ENCODE measurements at regions of chrX and their contacts with region 1.

Region 1: DNA sequence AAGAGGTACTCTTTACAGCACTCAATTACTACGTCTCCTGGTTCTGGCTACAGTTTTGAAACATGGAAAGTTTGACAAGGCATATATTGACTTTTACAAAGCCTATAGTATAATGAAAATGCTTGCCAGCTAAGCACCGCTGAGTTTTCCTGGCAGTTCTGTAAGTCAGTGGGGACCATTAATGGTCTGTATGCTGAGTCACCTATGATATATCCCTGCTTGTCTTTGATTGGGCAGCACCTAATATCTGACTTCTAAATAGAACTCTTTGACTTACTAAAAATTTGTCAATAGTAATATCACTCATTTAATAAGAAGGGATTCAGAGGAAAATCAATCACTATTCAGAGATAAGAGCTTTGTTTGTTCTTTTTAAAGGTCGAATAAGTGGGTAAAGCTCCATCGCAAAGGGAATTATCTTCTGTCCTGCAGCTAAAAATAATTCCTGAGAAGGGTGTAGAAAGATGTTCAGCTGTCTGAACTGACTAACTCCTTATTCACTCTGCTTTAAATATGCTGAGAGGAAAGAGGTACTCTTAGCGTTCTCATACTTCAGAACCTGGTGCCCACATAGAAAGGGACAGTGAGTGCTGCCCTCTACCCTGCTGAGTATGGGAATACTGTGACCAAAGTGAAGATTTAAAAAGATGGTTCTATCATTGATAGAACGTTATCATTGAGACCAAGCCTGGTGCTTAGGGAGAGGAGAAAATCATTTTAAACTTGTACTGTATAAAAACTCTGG is 959 bp downstream of the SMPX start:
- DNase-seq: no peak
- ATAC-seq: peak; percentile 82 to 89 (median 86)
- H3K4me3 ChIP-seq: peak overlapping the region; percentile 29 to 62 (median 49)
- H3K27ac ChIP-seq: peak overlapping the region; percentile 56 to 95 (median 84)
- H3K4me1 ChIP-seq: peaks cover 0 to 3% (median 0%) of the 10 kb centered on the region in 12 donors
- H3K27me3 ChIP-seq: peaks cover 0 to 4% (median 0%) of the 10 kb centered on the region in 9 donors
- CTCF ChIP-seq: peak in 6 of 12 donors; percentile 7 to 20 (median 14)
- POLR2A ChIP-seq: peak in 1 of 2 donors; percentile 14

Region 2: GRCh38 chrX:21798677-21799219 is 41.8 kb after region 1 on chrX:
- intact Hi-C with region 1: loop called in 1 of 10 experiments (anchors 5 kb)
- DNase-seq: peak in 1 of 5 donors; percentile 21
- ATAC-seq: peak; percentile 87 to 91 (median 88)
- H3K4me3 ChIP-seq: no peak overlapping the region
- H3K27ac ChIP-seq: peak overlapping the region in 8 of 12 donors; percentile 45 to 67 (median 56)
- H3K4me1 ChIP-seq: peaks cover 0 to 9% (median 0%) of the 10 kb centered on the region in 12 donors
- H3K27me3 ChIP-seq: peaks cover 0 to 7% (median 0%) of the 10 kb centered on the region in 9 donors
- CTCF ChIP-seq: no peak
- POLR2A ChIP-seq: no peak

Region 3: DNA sequence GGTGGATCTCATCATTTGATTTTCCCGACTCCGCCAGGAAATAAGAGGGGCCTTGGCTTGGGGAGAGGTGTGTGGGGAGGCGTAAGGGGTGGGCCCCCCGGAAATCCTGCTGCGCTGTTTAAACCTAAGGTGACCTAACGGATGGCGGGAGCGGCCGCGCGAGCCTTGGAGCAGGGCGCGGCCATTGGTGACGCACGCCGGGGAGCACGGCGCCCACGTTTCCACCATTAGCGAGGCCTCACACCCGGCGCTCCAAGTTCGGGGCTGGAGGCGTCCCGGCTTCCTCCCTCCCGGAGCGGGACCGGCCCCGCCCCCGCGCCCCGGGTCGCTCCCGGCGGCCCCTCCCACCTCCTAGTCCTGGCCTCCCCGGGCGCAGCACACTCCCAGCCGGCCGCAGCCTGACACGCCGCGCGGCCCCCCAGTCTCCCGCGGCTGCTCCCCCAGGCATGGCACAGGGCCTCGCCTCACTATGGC is 183.4 kb after region 1 on chrX and contains the start of gene SMS:
- intact Hi-C with region 1: loop called in 1 of 10 experiments (anchors 10 kb)
- DNase-seq: peak; percentile 79 to 86 (median 85)
- ATAC-seq: peak; percentile 84 to 96 (median 94)
- H3K4me3 ChIP-seq: peak within 1 kb of the TSS; percentile 23 to 80 (median 57)
- H3K27ac ChIP-seq: peak within 1 kb of the TSS; percentile 47 to 82 (median 78)
- H3K4me1 ChIP-seq: peaks cover 0 to 21% (median 1%) of the 10 kb centered on the region in 12 donors
- H3K27me3 ChIP-seq: peaks cover 0 to 5% (median 0%) of the 10 kb centered on the region in 9 donors
- CTCF ChIP-seq: no peak
- POLR2A ChIP-seq: peak in 1 of 2 donors; percentile 57
- total RNA-seq, gene SMS: 25.5 to 77.2 (median 50.2) TPM

Region 4: GRCh38 chrX:21972721-21973120 is 215.8 kb after region 1 on chrX:
- intact Hi-C with region 1: loop called in 1 of 10 experiments (anchors 10 kb)
- DNase-seq: peak in 1 of 5 donors; percentile 55
- ATAC-seq: peak; percentile 66 to 88 (median 78)
- H3K4me3 ChIP-seq: no peak overlapping the region
- H3K27ac ChIP-seq: peak overlapping the region in 1 of 12 donors; percentile 34
- H3K4me1 ChIP-seq: peaks cover 0 to 13% (median 0%) of the 10 kb centered on the region in 12 donors
- H3K27me3 ChIP-seq: no peaks in the 10 kb centered on the region
- CTCF ChIP-seq: no peak
- POLR2A ChIP-seq: no peak